ENCODE measurements at regions of chr3 and their contacts with region 1.

Region 1: GRCh38 chr3:61858056-61858455 is 296.7 kb downstream of the PTPRG start:
- DNase-seq: no peak
- ATAC-seq: peak; percentile 53
- H3K4me3 ChIP-seq: no peak overlapping the region
- H3K27ac ChIP-seq: no peak overlapping the region
- H3K4me1 ChIP-seq: no peaks in the 10 kb centered on the region
- H3K27me3 ChIP-seq: peaks cover 0 to 3% of the 10 kb centered on the region in 2 experiments; a peak in 1 of 4 replicates
- CTCF ChIP-seq: peak; percentile 27 to 65 (median 29); a peak in 3 of 6 replicates
- EP300 ChIP-seq: no peak
- POLR2A ChIP-seq: no peak
- RAD21 ChIP-seq: peak; percentile 62

Region 2: GRCh38 chr3:61264281-61264680 is 593.8 kb before region 1 on chr3:
- CTCF ChIA-PET with region 1: no interaction called
- POLR2A ChIA-PET with region 1: no interaction called
- RAD21 ChIA-PET with region 1: no interaction called
- SMC1A ChIA-PET with region 1: no interaction called
- in situ Hi-C with region 1: no loop called
- intact Hi-C with region 1: no loop called
- DNase-seq: no peak
- ATAC-seq: no peak
- H3K4me3 ChIP-seq: no peak overlapping the region
- H3K27ac ChIP-seq: no peak overlapping the region
- H3K4me1 ChIP-seq: no peaks in the 10 kb centered on the region
- H3K27me3 ChIP-seq: no peaks in the 10 kb centered on the region
- CTCF ChIP-seq: no peak
- EP300 ChIP-seq: no peak
- POLR2A ChIP-seq: no peak
- RAD21 ChIP-seq: no peak

Region 3: DNA sequence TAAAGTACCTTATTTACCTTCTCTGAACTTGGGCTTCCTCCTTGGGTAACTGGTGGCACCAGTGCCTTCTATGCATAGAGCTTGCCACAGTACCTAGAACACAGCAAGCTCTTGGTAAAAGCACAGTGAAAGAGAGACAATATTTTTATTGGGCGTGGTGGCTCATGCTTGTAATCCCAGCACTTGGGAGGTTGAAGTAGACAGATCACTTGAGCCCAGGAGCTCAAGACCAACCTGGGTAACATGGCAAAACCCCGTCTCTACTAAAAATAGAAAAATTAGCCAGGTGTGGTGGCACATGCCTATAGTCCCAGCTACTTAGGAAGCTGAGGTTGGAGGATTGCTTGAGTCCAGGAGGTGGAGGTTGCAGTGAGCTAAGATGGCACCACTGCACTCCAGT is 11.6 kb before region 1 on chr3:
- CTCF ChIA-PET with region 1: interaction called, 10 read pairs
- POLR2A ChIA-PET with region 1: interaction called, 5 read pairs
- RAD21 ChIA-PET with region 1: interaction called, 8 read pairs
- SMC1A ChIA-PET with region 1: interaction called, 30 read pairs
- in situ Hi-C with region 1: no loop called
- intact Hi-C with region 1: no loop called
- DNase-seq: no peak
- ATAC-seq: no peak
- H3K4me3 ChIP-seq: no peak overlapping the region
- H3K27ac ChIP-seq: no peak overlapping the region
- H3K4me1 ChIP-seq: no peaks in the 10 kb centered on the region
- H3K27me3 ChIP-seq: no peaks in the 10 kb centered on the region; a peak in 1 of 4 replicates
- CTCF ChIP-seq: no peak
- EP300 ChIP-seq: no peak
- POLR2A ChIP-seq: no peak
- RAD21 ChIP-seq: no peak

Region 4: GRCh38 chr3:61877348-61878138 is 19.5 kb after region 1 on chr3:
- CTCF ChIA-PET with region 1: interaction called, 20 read pairs
- POLR2A ChIA-PET with region 1: no interaction called
- RAD21 ChIA-PET with region 1: interaction called, 10 read pairs
- SMC1A ChIA-PET with region 1: interaction called, 17 read pairs
- in situ Hi-C with region 1: no loop called
- intact Hi-C with region 1: no loop called
- DNase-seq: peak; percentile 17
- ATAC-seq: peak; percentile 88
- H3K4me3 ChIP-seq: no peak overlapping the region
- H3K27ac ChIP-seq: no peak overlapping the region
- H3K4me1 ChIP-seq: no peaks in the 10 kb centered on the region
- H3K27me3 ChIP-seq: no peaks in the 10 kb centered on the region; a peak in 2 of 4 replicates
- CTCF ChIP-seq: no peak; a peak in 1 of 6 replicates
- EP300 ChIP-seq: peak in 1 of 2 experiments; percentile 30; a peak in 1 of 4 replicates
- POLR2A ChIP-seq: no peak
- RAD21 ChIP-seq: no peak

Region 5: GRCh38 chr3:61894988-61895935 is 37.2 kb after region 1 on chr3:
- CTCF ChIA-PET with region 1: interaction called, 6 read pairs
- POLR2A ChIA-PET with region 1: no interaction called
- RAD21 ChIA-PET with region 1: interaction called, 15 read pairs
- SMC1A ChIA-PET with region 1: interaction called, 19 read pairs
- in situ Hi-C with region 1: no loop called
- intact Hi-C with region 1: no loop called
- DNase-seq: peak; percentile 87
- ATAC-seq: peak; percentile 90
- H3K4me3 ChIP-seq: no peak overlapping the region
- H3K27ac ChIP-seq: no peak overlapping the region; the same call in 1 of the 2 replicates
- H3K4me1 ChIP-seq: peaks cover 5% of the 10 kb centered on the region; the same call in 1 of the 2 replicates
- H3K27me3 ChIP-seq: no peaks in the 10 kb centered on the region
- CTCF ChIP-seq: peak in 1 of 3 experiments; percentile 21; a peak in 1 of 6 replicates
- EP300 ChIP-seq: peak; percentile 62 to 92
- POLR2A ChIP-seq: no peak
- RAD21 ChIP-seq: no peak; the same call in 1 of the 2 replicates

Region 6: DNA sequence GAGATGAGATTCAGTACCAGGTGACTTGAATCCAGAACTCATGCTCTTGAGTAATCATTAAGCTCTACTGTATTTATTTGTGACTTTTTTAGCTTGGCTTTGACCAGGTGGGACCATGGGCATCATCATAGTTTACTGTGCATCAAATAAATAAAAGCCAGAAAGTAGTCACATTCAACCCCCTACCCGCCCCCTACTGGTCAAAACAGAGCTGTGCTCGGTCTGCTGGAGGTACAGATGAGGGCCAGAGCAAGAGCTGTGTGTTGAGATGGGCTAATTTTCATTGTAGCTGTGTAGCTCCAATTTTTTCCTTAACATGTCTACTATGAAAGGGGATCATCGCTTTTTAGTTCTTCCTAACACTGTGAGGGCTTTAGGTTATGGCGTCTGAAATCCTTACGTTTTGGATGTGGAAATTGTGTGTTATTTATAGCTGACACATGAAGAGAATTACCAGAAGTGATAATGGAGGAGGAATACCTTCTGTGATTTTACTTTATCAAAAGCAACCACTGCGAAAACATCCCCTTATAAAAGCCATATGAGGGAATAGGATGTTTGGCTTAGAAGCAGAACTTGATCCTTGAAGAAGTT is 78.4 kb after region 1 on chr3:
- CTCF ChIA-PET with region 1: interaction called, 66 read pairs
- POLR2A ChIA-PET with region 1: interaction called, 3 read pairs
- RAD21 ChIA-PET with region 1: interaction called, 18 read pairs
- SMC1A ChIA-PET with region 1: interaction called, 135 read pairs
- in situ Hi-C with region 1: no loop called
- intact Hi-C with region 1: loop called (anchors 1 kb)
- DNase-seq: no peak
- ATAC-seq: peak; percentile 79
- H3K4me3 ChIP-seq: no peak overlapping the region
- H3K27ac ChIP-seq: no peak overlapping the region
- H3K4me1 ChIP-seq: no peaks in the 10 kb centered on the region
- H3K27me3 ChIP-seq: no peaks in the 10 kb centered on the region
- CTCF ChIP-seq: peak; percentile 51 to 79 (median 76)
- EP300 ChIP-seq: no peak
- POLR2A ChIP-seq: no peak
- RAD21 ChIP-seq: peak; percentile 55

Region 7: DNA sequence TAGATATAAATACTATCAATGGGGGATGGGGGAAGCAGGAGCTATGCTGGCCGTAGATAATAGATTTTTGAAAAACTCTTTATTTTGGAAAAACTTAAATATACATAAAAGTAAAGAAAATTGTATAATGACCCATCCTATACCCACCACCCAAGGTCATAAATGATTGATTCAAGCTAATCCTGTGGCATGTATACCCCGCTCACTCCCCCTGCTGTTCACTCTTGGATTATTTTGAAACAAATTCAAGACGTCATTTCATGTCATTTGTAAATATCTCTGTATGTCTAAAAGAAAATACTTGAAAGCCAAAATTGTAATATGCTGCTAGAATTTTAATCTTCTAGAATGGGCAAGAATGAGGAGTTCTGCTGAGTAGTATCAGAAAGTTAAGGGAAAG is 273.5 kb after region 1 on chr3:
- CTCF ChIA-PET with region 1: interaction called, 51 read pairs
- POLR2A ChIA-PET with region 1: no interaction called
- RAD21 ChIA-PET with region 1: interaction called, 22 read pairs
- SMC1A ChIA-PET with region 1: interaction called, 33 read pairs
- in situ Hi-C with region 1: no loop called
- intact Hi-C with region 1: loop called (anchors 1 kb)
- DNase-seq: no peak
- ATAC-seq: peak; percentile 61
- H3K4me3 ChIP-seq: no peak overlapping the region
- H3K27ac ChIP-seq: no peak overlapping the region
- H3K4me1 ChIP-seq: no peaks in the 10 kb centered on the region
- H3K27me3 ChIP-seq: no peaks in the 10 kb centered on the region
- CTCF ChIP-seq: peak in 2 of 3 experiments; percentile 26 to 34; a peak in 2 of 6 replicates
- EP300 ChIP-seq: no peak
- POLR2A ChIP-seq: no peak
- RAD21 ChIP-seq: 0 out of 2 replicates have a peak, but pooled peaks have one; percentile 19

Region 8: GRCh38 chr3:62188681-62189383 is 330.8 kb after region 1 on chr3:
- CTCF ChIA-PET with region 1: interaction called, 198 read pairs
- POLR2A ChIA-PET with region 1: no interaction called
- RAD21 ChIA-PET with region 1: interaction called, 48 read pairs
- SMC1A ChIA-PET with region 1: interaction called, 138 read pairs
- in situ Hi-C with region 1: loop called (anchors 5 kb)
- intact Hi-C with region 1: loop called (anchors 1 kb)
- DNase-seq: no peak
- ATAC-seq: peak; percentile 89
- H3K4me3 ChIP-seq: no peak overlapping the region
- H3K27ac ChIP-seq: no peak overlapping the region
- H3K4me1 ChIP-seq: no peaks in the 10 kb centered on the region
- H3K27me3 ChIP-seq: no peaks in the 10 kb centered on the region
- CTCF ChIP-seq: peak; percentile 71 to 82 (median 76)
- EP300 ChIP-seq: no peak
- POLR2A ChIP-seq: no peak
- RAD21 ChIP-seq: peak; percentile 78